CD4-positive, alpha-beta memory T cell (primary cell): ENCODE measurements at regions of chr5 and their contacts with region 1.

Region 1: DNA sequence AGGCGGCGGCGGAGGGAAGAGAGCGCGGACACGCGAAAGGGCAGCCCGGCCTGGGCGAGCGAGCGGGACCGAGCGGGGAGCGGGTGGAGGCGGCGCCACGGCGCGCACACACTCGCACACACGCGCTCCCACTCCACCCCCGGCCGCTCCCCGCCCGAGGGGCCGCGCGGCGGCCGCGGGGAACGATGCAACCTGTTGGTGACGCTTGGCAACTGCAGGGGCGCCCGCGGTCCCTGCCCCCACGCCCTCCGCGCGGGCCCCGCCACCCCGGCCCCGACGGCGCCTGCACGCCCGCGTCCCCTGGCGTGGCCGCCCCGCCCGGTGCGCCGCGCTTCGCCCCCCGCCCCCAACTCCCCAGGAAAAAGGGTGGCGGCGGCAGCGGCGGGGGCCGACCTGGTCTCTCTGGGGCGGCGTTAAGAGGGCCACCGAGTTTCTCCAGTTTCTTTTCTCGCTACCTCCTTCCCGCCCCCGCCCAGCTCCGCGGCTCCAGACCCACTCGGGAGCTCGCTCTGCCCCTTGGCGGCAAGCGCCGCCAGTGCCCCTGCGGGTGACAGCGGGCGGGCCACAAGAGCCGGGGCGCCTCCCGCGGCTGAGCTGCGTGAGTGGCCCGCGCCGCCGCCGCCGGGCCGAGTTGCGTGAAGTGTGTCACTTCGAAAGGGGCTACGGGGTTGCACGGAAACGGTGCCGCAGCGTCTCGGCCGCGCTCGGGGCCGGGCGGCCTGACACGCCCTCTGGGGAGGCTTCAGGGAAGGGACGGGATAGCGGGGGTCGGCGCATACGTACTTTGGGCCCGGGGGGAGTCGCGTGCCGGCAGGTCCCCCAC is at the start of gene NR3C1:
- DNase-seq: peak; percentile 89 to 92 (median 91)
- H3K4me3 ChIP-seq: peak within 1 kb of the TSS; percentile 77 to 93
- H3K4me3 Mint-ChIP-seq: peak within 1 kb of the TSS; percentile 92 to 97 (median 94)
- H3K27ac ChIP-seq: peak within 1 kb of the TSS; percentile 90
- H3K27ac Mint-ChIP-seq: peak within 1 kb of the TSS; percentile 95 to 100 (median 99)
- H3K4me1 ChIP-seq: peaks cover 39% of the 10 kb centered on the region
- H3K4me1 Mint-ChIP-seq: peaks cover 32 to 50% (median 40%) of the 10 kb centered on the region in 4 donors
- H3K27me3 ChIP-seq: no peaks in the 10 kb centered on the region
- H3K27me3 Mint-ChIP-seq: no peaks in the 10 kb centered on the region
- total RNA-seq, gene NR3C1: 161 to 164 TPM

Region 2: GRCh38 chr5:143002459-143003328 is 401.1 kb before region 1 on chr5:
- CTCF ChIA-PET with region 1: interaction called, 37 read pairs
- POLR2A ChIA-PET with region 1: interaction called, 118 read pairs
- intact Hi-C with region 1: loop called (anchors 1 kb)
- DNase-seq: peak; percentile 72 to 88 (median 75)
- H3K4me3 ChIP-seq: no peak overlapping the region
- H3K4me3 Mint-ChIP-seq: peak overlapping the region; percentile 40 to 79 (median 61)
- H3K27ac ChIP-seq: peak overlapping the region; percentile 77
- H3K27ac Mint-ChIP-seq: peak overlapping the region; percentile 87 to 98 (median 96)
- H3K4me1 ChIP-seq: peaks cover 54% of the 10 kb centered on the region
- H3K4me1 Mint-ChIP-seq: peaks cover 46 to 76% (median 57%) of the 10 kb centered on the region in 4 donors
- H3K27me3 ChIP-seq: no peaks in the 10 kb centered on the region
- H3K27me3 Mint-ChIP-seq: no peaks in the 10 kb centered on the region

Region 3: DNA sequence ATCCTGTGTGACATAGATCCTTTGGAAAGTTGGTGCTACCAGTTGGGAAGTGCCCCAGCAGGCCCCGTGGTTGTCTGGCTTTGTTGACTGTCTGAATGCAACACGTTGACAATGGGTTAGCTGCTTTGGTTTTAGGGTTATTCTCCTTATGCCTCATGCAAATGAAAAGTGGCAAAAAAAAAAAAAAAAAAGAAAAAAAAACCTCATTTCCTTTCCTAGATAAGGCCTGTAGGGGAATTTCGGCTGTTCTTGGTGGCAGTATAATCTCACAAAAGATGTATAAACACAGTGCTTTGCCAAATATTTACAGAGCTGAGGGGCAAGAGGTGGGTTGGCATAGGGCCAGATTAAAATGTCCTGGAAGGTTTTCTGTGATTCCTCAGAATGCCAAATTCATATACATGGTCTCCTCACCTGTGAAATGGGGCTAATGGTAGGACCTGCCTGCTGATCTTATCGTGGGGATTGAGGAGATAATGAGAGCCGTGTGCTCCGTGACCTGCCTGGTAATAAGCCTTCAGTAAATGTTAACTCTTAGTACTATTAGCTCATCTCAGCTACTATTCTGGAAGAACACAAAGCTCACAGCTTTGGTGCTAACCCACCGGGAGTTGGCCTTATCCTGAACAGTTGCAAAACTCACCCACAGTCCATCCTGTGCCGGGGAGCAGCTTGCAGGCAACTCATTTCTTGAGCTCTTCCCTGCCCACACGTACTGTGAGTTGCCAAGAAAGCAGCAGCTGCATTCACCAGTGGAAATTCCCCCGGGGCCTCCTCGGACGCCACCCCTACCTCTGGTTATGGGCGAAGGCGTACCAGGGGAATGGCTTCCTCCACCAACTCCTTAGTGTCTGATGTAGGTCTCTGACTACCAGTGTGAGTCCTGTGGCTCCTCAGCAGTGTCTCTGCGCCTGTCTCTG is 220.6 kb before region 1 on chr5:
- CTCF ChIA-PET with region 1: no interaction called
- POLR2A ChIA-PET with region 1: no interaction called
- intact Hi-C with region 1: loop called (anchors 2 kb)
- DNase-seq: peak; percentile 4 to 68 (median 37)
- H3K4me3 ChIP-seq: no peak overlapping the region
- H3K4me3 Mint-ChIP-seq: peak overlapping the region; percentile 5 to 84 (median 61)
- H3K27ac ChIP-seq: peak overlapping the region; percentile 23
- H3K27ac Mint-ChIP-seq: peak overlapping the region; percentile 48 to 94 (median 76)
- H3K4me1 ChIP-seq: peaks cover 33% of the 10 kb centered on the region
- H3K4me1 Mint-ChIP-seq: peaks cover 36 to 49% (median 42%) of the 10 kb centered on the region in 4 donors
- H3K27me3 ChIP-seq: no peaks in the 10 kb centered on the region
- H3K27me3 Mint-ChIP-seq: no peaks in the 10 kb centered on the region

Region 4: GRCh38 chr5:143355720-143356119 is 48.1 kb before region 1 on chr5:
- CTCF ChIA-PET with region 1: interaction called, 12 read pairs
- POLR2A ChIA-PET with region 1: interaction called, 57 read pairs
- intact Hi-C with region 1: loop called (anchors 1 kb)
- DNase-seq: peak; percentile 64 to 88 (median 74)
- H3K4me3 ChIP-seq: no peak overlapping the region
- H3K4me3 Mint-ChIP-seq: peak overlapping the region in 7 of 8 donors; percentile 28 to 64 (median 35)
- H3K27ac ChIP-seq: no peak overlapping the region
- H3K27ac Mint-ChIP-seq: peak overlapping the region; percentile 38 to 73 (median 57)
- H3K4me1 ChIP-seq: peaks cover 99% of the 10 kb centered on the region
- H3K4me1 Mint-ChIP-seq: peaks cover 59 to 89% (median 72%) of the 10 kb centered on the region in 4 donors
- H3K27me3 ChIP-seq: no peaks in the 10 kb centered on the region
- H3K27me3 Mint-ChIP-seq: no peaks in the 10 kb centered on the region

Region 5: DNA sequence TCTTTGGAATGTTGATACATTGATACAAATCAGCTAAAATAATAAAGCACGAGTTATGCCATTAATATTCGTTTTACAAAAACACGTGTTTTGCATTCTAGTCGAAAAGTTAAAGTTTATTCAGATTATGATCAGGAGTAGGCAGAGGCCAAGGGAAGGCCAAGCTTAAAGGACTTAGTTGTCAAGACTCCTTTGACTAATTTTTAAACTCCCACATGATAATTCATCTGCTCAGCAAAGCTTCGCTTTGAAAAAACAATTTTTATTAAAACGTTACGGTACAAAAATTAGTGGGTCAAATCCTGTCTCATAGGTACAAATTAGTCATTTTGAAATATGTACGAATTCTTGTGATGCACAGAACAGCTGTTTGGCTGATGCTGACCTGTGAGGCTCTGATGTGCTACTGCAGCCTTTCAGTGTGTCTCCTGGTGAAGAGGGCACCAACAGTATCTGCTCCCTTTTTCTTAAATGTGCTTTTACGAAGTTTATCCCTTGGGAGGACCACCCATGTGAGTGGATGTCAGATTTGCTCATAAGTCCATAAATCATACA is 22.7 kb after region 1 on chr5:
- CTCF ChIA-PET with region 1: interaction called, 3 read pairs
- POLR2A ChIA-PET with region 1: interaction called, 250 read pairs
- intact Hi-C with region 1: no loop called
- DNase-seq: no peak
- H3K4me3 ChIP-seq: no peak overlapping the region
- H3K4me3 Mint-ChIP-seq: peak overlapping the region in 2 of 8 donors; percentile 14 to 15
- H3K27ac ChIP-seq: no peak overlapping the region
- H3K27ac Mint-ChIP-seq: peak overlapping the region in 3 of 7 donors; percentile 5 to 19 (median 16)
- H3K4me1 ChIP-seq: peaks cover 27% of the 10 kb centered on the region
- H3K4me1 Mint-ChIP-seq: peaks cover 25 to 62% (median 43%) of the 10 kb centered on the region in 4 donors
- H3K27me3 ChIP-seq: no peaks in the 10 kb centered on the region
- H3K27me3 Mint-ChIP-seq: peaks cover 0 to 1% of the 10 kb centered on the region in 2 donors

Region 6: GRCh38 chr5:143448518-143448917 is 44.7 kb after region 1 on chr5:
- CTCF ChIA-PET with region 1: no interaction called
- POLR2A ChIA-PET with region 1: interaction called, 33 read pairs
- intact Hi-C with region 1: no loop called
- DNase-seq: peak in 4 of 5 donors; percentile 22 to 31 (median 26)
- H3K4me3 ChIP-seq: no peak overlapping the region
- H3K4me3 Mint-ChIP-seq: no peak overlapping the region
- H3K27ac ChIP-seq: no peak overlapping the region
- H3K27ac Mint-ChIP-seq: peak overlapping the region in 2 of 7 donors; percentile 56 to 57
- H3K4me1 ChIP-seq: peaks cover 11% of the 10 kb centered on the region
- H3K4me1 Mint-ChIP-seq: peaks cover 4 to 24% (median 12%) of the 10 kb centered on the region in 4 donors
- H3K27me3 ChIP-seq: no peaks in the 10 kb centered on the region
- H3K27me3 Mint-ChIP-seq: no peaks in the 10 kb centered on the region

Region 7: DNA sequence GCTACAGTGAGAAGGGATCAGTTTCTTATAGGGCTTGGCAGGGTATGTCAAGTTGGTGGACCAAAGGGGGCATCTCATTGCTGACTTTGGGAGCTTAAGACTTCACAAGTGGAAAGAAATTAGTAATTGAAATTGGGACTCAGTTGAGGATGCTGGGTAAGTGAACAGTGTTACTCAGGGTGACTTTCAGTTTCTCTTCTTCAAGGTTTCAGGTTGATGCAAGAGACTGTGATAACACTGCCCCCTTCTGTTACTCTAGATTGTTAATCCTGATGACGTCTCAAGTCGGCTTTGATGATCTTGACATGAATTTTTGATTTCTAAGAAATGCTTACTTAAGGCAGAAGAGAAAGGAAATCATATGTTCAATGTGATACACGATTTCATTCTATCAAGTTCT is 788.2 kb after region 1 on chr5:
- CTCF ChIA-PET with region 1: interaction called, 13 read pairs
- POLR2A ChIA-PET with region 1: interaction called, 74 read pairs
- intact Hi-C with region 1: loop called (anchors 2 kb)
- DNase-seq: peak; percentile 73 to 86 (median 82)
- H3K4me3 ChIP-seq: peak overlapping the region in 1 of 2 donors; percentile 32
- H3K4me3 Mint-ChIP-seq: no peak overlapping the region
- H3K27ac ChIP-seq: peak overlapping the region; percentile 78
- H3K27ac Mint-ChIP-seq: no peak overlapping the region
- H3K4me1 ChIP-seq: peaks cover 55% of the 10 kb centered on the region
- H3K4me1 Mint-ChIP-seq: peaks cover 0 to 40% (median 35%) of the 10 kb centered on the region in 4 donors
- H3K27me3 ChIP-seq: no peaks in the 10 kb centered on the region
- H3K27me3 Mint-ChIP-seq: no peaks in the 10 kb centered on the region